Activated CD4-positive, alpha-beta memory T cell treated with anti-CD3 and anti-CD28 coated beads, Interleukin-2, amount 10 ng/mL, durations not matched to agents 7 days and 5 days (primary cell): ENCODE measurements at regions of chr14 and their contacts with region 1.

Region 1: GRCh38 chr14:61025251-61026223 is 44.5 kb downstream of the SLC38A6 start:
- DNase-seq: peak; percentile 68
- H3K4me3 Mint-ChIP-seq: no peak overlapping the region
- H3K27ac Mint-ChIP-seq: no peak overlapping the region
- H3K4me1 Mint-ChIP-seq: peaks cover 13% of the 10 kb centered on the region
- H3K27me3 Mint-ChIP-seq: no peaks in the 10 kb centered on the region

Region 2: DNA sequence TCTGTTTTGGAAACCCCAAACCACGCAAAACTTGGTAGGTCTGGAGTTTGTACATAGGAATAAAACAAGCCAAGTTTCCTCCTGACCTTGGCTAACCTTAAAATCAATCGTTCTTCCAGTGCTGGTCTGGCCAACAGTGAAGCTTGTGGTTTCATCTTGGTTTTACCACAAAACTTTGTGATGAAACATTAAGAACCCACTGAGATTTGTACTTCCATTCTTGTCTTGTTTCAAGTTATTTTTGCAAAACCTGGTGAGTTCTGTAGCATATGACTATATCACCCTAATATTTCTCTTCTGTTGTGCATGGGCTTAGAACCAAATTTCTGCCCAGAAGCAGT is 402.6 kb before region 1 on chr14:
- CTCF ChIA-PET with region 1: interaction called, 31 read pairs
- POLR2A ChIA-PET with region 1: no interaction called
- DNase-seq: no peak
- H3K4me3 Mint-ChIP-seq: no peak overlapping the region
- H3K27ac Mint-ChIP-seq: no peak overlapping the region
- H3K4me1 Mint-ChIP-seq: peaks cover 12% of the 10 kb centered on the region
- H3K27me3 Mint-ChIP-seq: peaks cover 33% of the 10 kb centered on the region

Region 3: GRCh38 chr14:60744566-60744965 is 281.0 kb before region 1 on chr14:
- CTCF ChIA-PET with region 1: no interaction called
- POLR2A ChIA-PET with region 1: no interaction called
- DNase-seq: no peak
- H3K4me3 Mint-ChIP-seq: no peak overlapping the region
- H3K27ac Mint-ChIP-seq: no peak overlapping the region
- H3K4me1 Mint-ChIP-seq: no peaks in the 10 kb centered on the region
- H3K27me3 Mint-ChIP-seq: no peaks in the 10 kb centered on the region

Region 4: GRCh38 chr14:60965402-60965801 is 60.1 kb before region 1 on chr14:
- CTCF ChIA-PET with region 1: no interaction called
- POLR2A ChIA-PET with region 1: no interaction called
- DNase-seq: no peak
- H3K4me3 Mint-ChIP-seq: no peak overlapping the region
- H3K27ac Mint-ChIP-seq: peak overlapping the region; percentile 40
- H3K4me1 Mint-ChIP-seq: peaks cover 20% of the 10 kb centered on the region
- H3K27me3 Mint-ChIP-seq: no peaks in the 10 kb centered on the region

Region 5: GRCh38 chr14:61252369-61253063 is 227.0 kb after region 1 on chr14:
- CTCF ChIA-PET with region 1: interaction called, 12 read pairs
- POLR2A ChIA-PET with region 1: no interaction called
- DNase-seq: peak; percentile 77
- H3K4me3 Mint-ChIP-seq: no peak overlapping the region
- H3K27ac Mint-ChIP-seq: no peak overlapping the region
- H3K4me1 Mint-ChIP-seq: peaks cover 30% of the 10 kb centered on the region
- H3K27me3 Mint-ChIP-seq: peaks cover 8% of the 10 kb centered on the region

Region 6: DNA sequence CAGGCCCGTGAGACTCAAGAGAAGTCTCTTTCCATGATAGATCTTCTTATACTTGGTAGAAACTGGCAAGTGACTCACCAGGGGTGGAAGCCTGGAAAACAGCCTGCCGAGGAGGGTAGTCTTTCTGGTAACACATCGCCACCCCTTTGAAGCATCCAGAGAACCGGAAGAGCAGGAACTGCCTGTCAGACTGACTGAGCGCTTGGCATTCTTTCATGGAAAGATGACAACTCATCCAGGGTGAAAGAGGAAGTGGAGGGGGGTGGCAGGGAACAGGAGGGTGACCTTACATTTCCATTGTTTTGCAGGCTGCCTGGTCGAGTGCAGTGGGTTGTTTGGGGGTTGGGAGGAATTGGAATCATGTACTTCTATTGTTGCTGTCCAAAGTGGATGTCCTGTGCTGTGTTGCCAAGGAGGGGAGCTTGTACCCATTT is 330.4 kb after region 1 on chr14:
- CTCF ChIA-PET with region 1: no interaction called
- POLR2A ChIA-PET with region 1: no interaction called
- DNase-seq: no peak
- H3K4me3 Mint-ChIP-seq: peak overlapping the region; percentile 40
- H3K27ac Mint-ChIP-seq: peak overlapping the region; percentile 52
- H3K4me1 Mint-ChIP-seq: peaks cover 86% of the 10 kb centered on the region
- H3K27me3 Mint-ChIP-seq: no peaks in the 10 kb centered on the region